Natural killer cell (primary cell): ENCODE measurements at regions of chr1 and their contacts with region 1.

Region 1: DNA sequence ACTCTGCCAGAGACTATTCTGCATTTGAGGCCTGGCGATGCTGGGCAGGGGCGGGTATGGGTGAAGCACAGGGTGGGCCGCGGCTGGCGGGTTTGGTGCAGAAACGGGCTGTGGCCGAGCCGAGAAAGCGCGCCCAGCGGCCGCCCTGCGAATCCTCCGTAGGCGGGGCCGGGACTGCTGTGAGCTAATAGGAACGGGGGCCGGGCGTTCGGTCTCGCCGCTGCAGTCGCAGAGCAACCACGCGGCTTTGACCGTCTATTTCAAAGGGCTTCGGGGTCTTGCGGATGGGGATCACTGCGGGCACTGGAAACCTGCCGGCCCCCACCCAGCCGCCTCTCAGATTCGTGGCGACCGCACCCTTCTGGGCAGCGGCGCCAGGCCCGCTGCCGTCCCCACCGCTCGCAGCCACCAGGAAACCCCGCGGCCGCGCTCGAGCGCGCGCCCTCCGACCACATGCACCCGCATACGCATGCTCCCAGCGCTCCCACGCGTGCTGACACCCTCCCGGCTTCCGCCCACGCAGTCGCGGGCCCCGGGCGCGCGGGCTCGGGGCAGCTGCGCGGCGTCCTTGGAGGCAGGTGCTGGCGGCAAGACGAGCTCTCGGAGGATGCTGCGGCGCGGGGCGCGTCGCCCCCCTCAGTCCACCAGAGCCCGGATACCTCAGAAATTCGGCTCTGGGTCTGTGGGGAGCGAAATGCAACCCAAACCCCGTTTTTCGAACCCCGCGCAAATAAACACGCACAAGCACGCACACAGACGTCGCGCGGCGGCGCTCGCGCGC is 32.6 kb downstream of the DNTTIP2 start:
- DNase-seq: peak; percentile 84 to 94
- ATAC-seq: peak; percentile 45 to 71 (median 62)
- H3K4me3 ChIP-seq: peak overlapping the region; percentile 98
- H3K4me3 Mint-ChIP-seq: peak overlapping the region; percentile 97
- H3K27ac ChIP-seq: peak overlapping the region; percentile 96
- H3K27ac Mint-ChIP-seq: peak overlapping the region; percentile 95 to 99
- H3K4me1 ChIP-seq: peaks cover 25% of the 10 kb centered on the region
- H3K4me1 Mint-ChIP-seq: peaks cover 41% of the 10 kb centered on the region in 2 donors
- H3K27me3 ChIP-seq: no peaks in the 10 kb centered on the region
- H3K27me3 Mint-ChIP-seq: peaks cover 0 to 3% of the 10 kb centered on the region in 2 donors
- CTCF ChIP-seq: no peak

Region 2: GRCh38 chr1:93345633-93346420 is 500.6 kb before region 1 on chr1 and contains the start of gene DR1:
- intact Hi-C with region 1: loop called (anchors 2 kb)
- DNase-seq: peak; percentile 86 to 94
- ATAC-seq: peak; percentile 74 to 89 (median 78)
- H3K4me3 ChIP-seq: peak within 1 kb of the TSS; percentile 83
- H3K4me3 Mint-ChIP-seq: peak within 1 kb of the TSS; percentile 100
- H3K27ac ChIP-seq: peak within 1 kb of the TSS; percentile 89
- H3K27ac Mint-ChIP-seq: peak within 1 kb of the TSS; percentile 99 to 100
- H3K4me1 ChIP-seq: no peaks in the 10 kb centered on the region
- H3K4me1 Mint-ChIP-seq: peaks cover 46 to 48% of the 10 kb centered on the region in 2 donors
- H3K27me3 ChIP-seq: no peaks in the 10 kb centered on the region
- H3K27me3 Mint-ChIP-seq: no peaks in the 10 kb centered on the region
- CTCF ChIP-seq: no peak
- total RNA-seq, gene DR1: 84.3 to 91.4 (median 85.3) TPM

Region 3: GRCh38 chr1:93629099-93630059 is 217.0 kb before region 1 on chr1:
- intact Hi-C with region 1: loop called (anchors 1 kb)
- DNase-seq: peak in 1 of 2 donors; percentile 81
- ATAC-seq: peak; percentile 76 to 94 (median 91)
- H3K4me3 ChIP-seq: no peak overlapping the region
- H3K4me3 Mint-ChIP-seq: no peak overlapping the region
- H3K27ac ChIP-seq: no peak overlapping the region
- H3K27ac Mint-ChIP-seq: no peak overlapping the region
- H3K4me1 ChIP-seq: no peaks in the 10 kb centered on the region
- H3K4me1 Mint-ChIP-seq: no peaks in the 10 kb centered on the region
- H3K27me3 ChIP-seq: no peaks in the 10 kb centered on the region
- H3K27me3 Mint-ChIP-seq: peaks cover 0 to 7% of the 10 kb centered on the region in 2 donors
- CTCF ChIP-seq: peak; percentile 83

Region 4: DNA sequence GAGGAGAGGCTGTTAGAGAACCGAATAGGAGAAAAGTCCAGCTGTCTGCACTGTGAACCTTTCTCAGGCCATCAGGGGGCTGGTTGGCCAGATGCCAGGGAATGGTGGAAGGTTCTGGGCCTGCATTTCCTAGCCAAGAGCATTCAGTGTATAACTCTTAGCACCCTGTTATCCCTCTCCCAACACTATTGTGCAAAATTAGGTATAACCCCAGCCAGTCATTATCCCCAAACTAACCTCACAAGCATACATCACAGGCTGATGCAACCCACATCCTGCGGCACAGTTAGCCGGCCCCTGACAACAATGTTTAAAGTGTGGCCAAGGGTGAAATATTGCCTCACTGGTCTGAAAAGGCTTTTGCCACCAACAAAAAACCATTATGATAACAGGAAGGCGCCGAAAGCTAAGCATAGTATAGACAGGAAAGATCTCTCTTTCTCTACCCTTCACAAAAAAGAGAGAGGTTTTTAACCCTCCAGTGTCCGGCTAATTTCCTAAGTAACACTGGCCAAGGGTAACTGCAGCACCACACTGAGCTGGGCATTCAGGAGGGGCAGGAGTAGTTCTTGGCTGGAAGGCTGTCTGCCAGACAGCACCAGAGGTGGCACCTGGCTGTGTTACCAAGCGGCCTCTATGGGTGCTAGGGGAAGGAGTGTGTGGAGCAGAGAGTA is 87.4 kb before region 1 on chr1:
- intact Hi-C with region 1: loop called (anchors 2 kb)
- DNase-seq: peak; percentile 55 to 62
- ATAC-seq: peak; percentile 80 to 89 (median 85)
- H3K4me3 ChIP-seq: no peak overlapping the region
- H3K4me3 Mint-ChIP-seq: peak overlapping the region; percentile 80
- H3K27ac ChIP-seq: peak overlapping the region; percentile 83
- H3K27ac Mint-ChIP-seq: peak overlapping the region; percentile 93 to 97
- H3K4me1 ChIP-seq: peaks cover 59% of the 10 kb centered on the region
- H3K4me1 Mint-ChIP-seq: peaks cover 65 to 71% of the 10 kb centered on the region in 2 donors
- H3K27me3 ChIP-seq: no peaks in the 10 kb centered on the region
- H3K27me3 Mint-ChIP-seq: peaks cover 0 to 5% of the 10 kb centered on the region in 2 donors
- CTCF ChIP-seq: no peak

Region 5: DNA sequence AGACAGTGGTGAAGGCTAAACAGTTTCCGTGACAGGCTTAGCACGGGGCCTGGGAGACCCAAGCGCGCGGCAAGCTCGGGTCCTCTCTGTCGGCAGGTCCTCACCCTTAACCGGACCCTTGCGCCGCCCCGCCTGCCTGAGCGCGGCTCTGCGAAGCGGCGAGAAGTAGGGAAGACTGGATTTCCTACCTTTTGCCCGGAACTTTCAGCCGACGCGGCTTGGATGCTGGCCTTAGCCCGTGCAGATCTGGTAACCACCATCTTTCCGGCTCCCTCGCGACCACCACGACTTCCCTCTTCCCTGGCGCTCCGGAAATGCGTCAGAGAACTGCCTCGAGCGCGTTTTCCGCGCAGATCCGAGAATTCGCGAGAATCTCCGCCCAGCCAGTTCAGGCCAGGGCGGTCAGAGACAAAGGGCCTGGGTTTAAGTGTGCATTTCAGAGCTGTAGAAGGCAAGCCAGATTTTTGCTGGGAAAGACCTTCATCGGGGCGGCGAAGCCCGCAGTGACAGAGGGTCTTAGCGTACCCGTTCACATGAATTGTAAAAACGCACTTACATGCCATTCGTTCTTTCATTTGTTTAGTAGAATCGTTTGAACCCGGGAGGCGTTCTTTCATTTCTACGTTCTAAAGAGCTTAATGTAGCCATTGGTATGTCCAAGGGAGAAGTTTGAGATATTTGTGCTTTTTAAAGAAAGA is 32.6 kb after region 1 on chr1 and contains the start of gene DNTTIP2:
- intact Hi-C with region 1: loop called (anchors 1 kb)
- DNase-seq: peak; percentile 85 to 93
- ATAC-seq: peak; percentile 73 to 86 (median 84)
- H3K4me3 ChIP-seq: peak within 1 kb of the TSS; percentile 81
- H3K4me3 Mint-ChIP-seq: peak within 1 kb of the TSS; percentile 94
- H3K27ac ChIP-seq: peak within 1 kb of the TSS; percentile 94
- H3K27ac Mint-ChIP-seq: peak within 1 kb of the TSS; percentile 95 to 99
- H3K4me1 ChIP-seq: peaks cover 10% of the 10 kb centered on the region
- H3K4me1 Mint-ChIP-seq: peaks cover 42 to 45% of the 10 kb centered on the region in 2 donors
- H3K27me3 ChIP-seq: no peaks in the 10 kb centered on the region
- H3K27me3 Mint-ChIP-seq: no peaks in the 10 kb centered on the region
- CTCF ChIP-seq: no peak
- total RNA-seq, gene DNTTIP2: 88.5 to 104 (median 97.3) TPM

Region 6: GRCh38 chr1:93900723-93901509 is 54.5 kb after region 1 on chr1:
- intact Hi-C with region 1: no loop called
- DNase-seq: no peak
- ATAC-seq: no peak
- H3K4me3 ChIP-seq: no peak overlapping the region
- H3K4me3 Mint-ChIP-seq: no peak overlapping the region
- H3K27ac ChIP-seq: no peak overlapping the region
- H3K27ac Mint-ChIP-seq: peak overlapping the region in 1 of 2 donors; percentile 1
- H3K4me1 ChIP-seq: peaks cover 6% of the 10 kb centered on the region
- H3K4me1 Mint-ChIP-seq: peaks cover 11 to 14% of the 10 kb centered on the region in 2 donors
- H3K27me3 ChIP-seq: no peaks in the 10 kb centered on the region
- H3K27me3 Mint-ChIP-seq: no peaks in the 10 kb centered on the region
- CTCF ChIP-seq: no peak

Region 7: GRCh38 chr1:94012686-94013624 is 166.6 kb after region 1 on chr1:
- intact Hi-C with region 1: loop called (anchors 10 kb)
- DNase-seq: no peak
- ATAC-seq: no peak
- H3K4me3 ChIP-seq: no peak overlapping the region
- H3K4me3 Mint-ChIP-seq: no peak overlapping the region
- H3K27ac ChIP-seq: no peak overlapping the region
- H3K27ac Mint-ChIP-seq: peak overlapping the region; percentile 38 to 81
- H3K4me1 ChIP-seq: peaks cover 38% of the 10 kb centered on the region
- H3K4me1 Mint-ChIP-seq: peaks cover 59 to 61% of the 10 kb centered on the region in 2 donors
- H3K27me3 ChIP-seq: no peaks in the 10 kb centered on the region
- H3K27me3 Mint-ChIP-seq: no peaks in the 10 kb centered on the region
- CTCF ChIP-seq: no peak